ENCODE measurements at regions of chr16 and their contacts with region 1.

Region 1: DNA sequence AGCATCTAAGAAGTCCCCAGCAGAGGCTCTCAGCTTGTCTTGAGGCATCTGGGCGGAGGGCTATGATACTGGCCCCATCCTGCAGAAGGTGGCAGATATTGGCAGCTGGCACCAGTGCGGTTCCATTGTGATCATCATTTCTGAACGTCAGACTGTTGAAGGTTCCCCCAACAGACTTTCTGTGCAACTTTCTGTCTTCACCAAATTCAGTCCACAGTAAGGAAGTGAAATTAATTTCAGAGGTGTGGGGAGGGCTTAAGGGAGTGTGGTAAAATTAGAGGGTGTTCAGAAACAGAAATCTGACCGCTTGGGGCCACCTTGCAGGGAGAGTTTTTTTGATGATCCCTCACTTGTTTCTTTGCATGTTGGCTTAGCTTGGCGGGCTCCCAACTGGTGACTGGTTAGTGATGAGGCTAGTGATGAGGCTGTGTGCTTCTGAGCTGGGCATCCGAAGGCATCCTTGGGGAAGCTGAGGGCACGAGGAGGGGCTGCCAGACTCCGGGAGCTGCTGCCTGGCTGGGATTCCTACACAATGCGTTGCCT is at the start of gene CIITA:
- DNase-seq: peak; percentile 62
- ATAC-seq: peak; percentile 71
- H3K4me3 Mint-ChIP-seq: peak within 1 kb of the TSS; percentile 100
- H3K27ac Mint-ChIP-seq: peak within 1 kb of the TSS; percentile 90
- H3K4me1 Mint-ChIP-seq: peaks cover 70% of the 10 kb centered on the region
- H3K27me3 Mint-ChIP-seq: no peaks in the 10 kb centered on the region
- CTCF ChIP-seq: no peak
- total RNA-seq, gene CIITA: 332 and 401 TPM in 2 replicates

Region 2: DNA sequence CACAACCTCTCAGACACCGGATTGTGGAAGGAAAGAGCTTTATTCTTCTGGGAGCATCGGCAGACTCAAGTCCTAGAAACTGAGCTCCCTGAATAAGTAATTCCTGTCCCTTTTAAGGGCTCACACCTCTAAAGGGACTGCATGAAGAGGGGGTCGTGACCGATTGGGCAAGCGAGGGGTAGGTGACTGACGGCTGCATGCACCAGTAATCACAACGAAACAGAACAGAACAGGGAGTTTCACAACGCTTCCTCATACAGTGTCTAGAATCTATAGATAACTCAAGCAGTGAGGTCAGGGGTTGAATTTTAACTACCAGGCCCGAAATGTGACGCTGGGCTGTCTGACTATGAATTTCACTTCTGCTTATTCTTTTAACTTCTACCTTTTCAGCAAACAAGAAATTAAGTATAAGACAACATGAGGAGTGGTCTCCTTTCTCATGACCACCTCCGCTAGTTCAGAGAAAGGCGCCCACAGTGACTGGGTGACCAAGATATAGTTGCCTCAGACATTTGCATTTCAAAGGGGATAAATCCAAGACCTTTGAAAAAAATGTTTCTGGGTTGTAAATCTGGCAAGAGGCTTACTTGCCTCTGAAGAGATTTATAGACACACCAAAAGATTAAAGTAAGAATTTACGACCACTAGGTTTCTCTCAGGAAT is 579.4 kb before region 1 on chr16:
- CTCF ChIA-PET with region 1: no interaction called
- POLR2A ChIA-PET with region 1: no interaction called
- intact Hi-C with region 1: loop called (anchors 2 kb)
- DNase-seq: peak; percentile 43
- ATAC-seq: peak; percentile 94
- H3K4me3 Mint-ChIP-seq: peak overlapping the region; percentile 69
- H3K27ac Mint-ChIP-seq: peak overlapping the region; percentile 97
- H3K4me1 Mint-ChIP-seq: peaks cover 62% of the 10 kb centered on the region
- H3K27me3 Mint-ChIP-seq: no peaks in the 10 kb centered on the region
- CTCF ChIP-seq: no peak

Region 3: DNA sequence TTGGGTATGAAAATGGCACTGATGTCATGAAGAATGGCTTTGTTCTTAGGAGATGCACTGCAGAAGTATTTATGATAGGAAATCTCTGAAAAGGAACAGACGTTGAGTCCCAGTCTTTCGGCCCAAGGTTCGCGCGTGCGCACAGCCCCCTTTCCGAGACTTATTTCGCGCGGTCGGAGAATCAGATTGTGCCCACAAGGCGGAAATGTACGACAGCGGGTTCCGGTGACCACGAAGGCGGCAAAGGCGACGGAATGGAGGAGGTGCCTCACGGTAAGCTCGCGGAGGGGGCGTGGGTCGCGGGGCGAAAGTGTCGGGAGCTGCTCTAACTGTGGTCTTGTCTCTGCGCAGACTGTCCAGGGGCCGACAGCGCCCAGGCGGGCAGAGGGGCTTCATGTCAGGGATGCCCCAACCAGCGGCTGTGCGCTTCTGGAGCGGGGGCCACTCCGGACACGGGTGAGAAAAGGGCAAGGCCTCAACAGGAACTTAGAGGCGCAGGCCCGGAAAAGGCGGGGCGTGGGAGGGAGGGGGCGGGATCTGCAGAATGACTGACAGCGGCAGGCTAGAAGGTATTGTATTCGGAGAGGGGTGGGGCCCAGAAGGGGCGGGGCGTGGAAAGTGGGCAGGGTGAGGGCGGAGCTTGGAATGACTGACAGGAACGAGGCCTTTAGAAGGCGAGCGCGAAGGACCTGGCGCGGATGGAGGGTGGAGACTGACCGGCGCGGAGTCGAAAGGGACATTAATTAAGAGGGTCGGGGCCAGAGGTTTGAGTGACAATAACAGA is 133.1 kb before region 1 on chr16 and contains the start of gene NUBP1:
- CTCF ChIA-PET with region 1: interaction called, 19 read pairs
- POLR2A ChIA-PET with region 1: interaction called, 88 read pairs
- intact Hi-C with region 1: no loop called
- DNase-seq: peak; percentile 98
- ATAC-seq: peak; percentile 94
- H3K4me3 Mint-ChIP-seq: peak within 1 kb of the TSS; percentile 94
- H3K27ac Mint-ChIP-seq: peak within 1 kb of the TSS; percentile 99
- H3K4me1 Mint-ChIP-seq: peaks cover 69% of the 10 kb centered on the region
- H3K27me3 Mint-ChIP-seq: no peaks in the 10 kb centered on the region
- CTCF ChIP-seq: no peak
- total RNA-seq, gene NUBP1: 74.1 and 77.2 TPM in 2 replicates

Region 4: DNA sequence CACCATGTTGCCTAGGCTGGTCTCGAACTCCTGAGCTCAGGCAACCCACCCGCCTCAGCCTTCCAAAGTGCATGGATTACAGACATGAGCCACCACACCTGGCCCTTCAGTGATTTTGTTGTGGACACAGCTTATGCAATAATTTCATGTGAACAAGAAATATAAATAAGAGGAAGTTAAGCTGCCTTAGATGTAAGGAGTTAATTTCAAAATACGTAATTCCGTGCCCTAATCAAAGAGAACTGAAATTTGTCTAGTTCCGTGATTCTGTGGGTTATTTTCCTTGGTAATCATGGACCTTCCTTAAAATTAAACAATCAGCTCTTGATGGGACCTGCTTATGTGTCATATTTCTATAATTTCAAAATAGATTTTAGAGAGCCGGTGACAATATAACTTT is 70.2 kb before region 1 on chr16:
- CTCF ChIA-PET with region 1: interaction called, 7 read pairs
- POLR2A ChIA-PET with region 1: interaction called, 34 read pairs
- intact Hi-C with region 1: no loop called
- DNase-seq: no peak
- ATAC-seq: peak; percentile 54
- H3K4me3 Mint-ChIP-seq: peak overlapping the region; percentile 46
- H3K27ac Mint-ChIP-seq: peak overlapping the region; percentile 89
- H3K4me1 Mint-ChIP-seq: peaks cover 79% of the 10 kb centered on the region
- H3K27me3 Mint-ChIP-seq: no peaks in the 10 kb centered on the region
- CTCF ChIP-seq: no peak

Region 5: GRCh38 chr16:10856042-10856441 is 20.8 kb before region 1 on chr16:
- CTCF ChIA-PET with region 1: no interaction called
- POLR2A ChIA-PET with region 1: no interaction called
- intact Hi-C with region 1: no loop called
- DNase-seq: no peak
- ATAC-seq: no peak
- H3K4me3 Mint-ChIP-seq: no peak overlapping the region
- H3K27ac Mint-ChIP-seq: no peak overlapping the region
- H3K4me1 Mint-ChIP-seq: peaks cover 26% of the 10 kb centered on the region
- H3K27me3 Mint-ChIP-seq: no peaks in the 10 kb centered on the region
- CTCF ChIP-seq: no peak

Region 6: GRCh38 chr16:10888320-10888937 is 11.6 kb after region 1 on chr16:
- CTCF ChIA-PET with region 1: interaction called, 76 read pairs
- POLR2A ChIA-PET with region 1: interaction called, 318 read pairs
- intact Hi-C with region 1: loop called (anchors 1 kb)
- DNase-seq: no peak
- ATAC-seq: peak; percentile 6
- H3K4me3 Mint-ChIP-seq: peak overlapping the region; percentile 82
- H3K27ac Mint-ChIP-seq: peak overlapping the region; percentile 87
- H3K4me1 Mint-ChIP-seq: peaks cover 99% of the 10 kb centered on the region
- H3K27me3 Mint-ChIP-seq: no peaks in the 10 kb centered on the region
- CTCF ChIP-seq: no peak

Region 7: GRCh38 chr16:10944249-10945064 is 67.6 kb after region 1 on chr16 and contains the start of gene CLEC16A:
- CTCF ChIA-PET with region 1: interaction called, 4 read pairs
- POLR2A ChIA-PET with region 1: interaction called, 4 read pairs
- intact Hi-C with region 1: loop called (anchors 2 kb)
- DNase-seq: peak; percentile 97
- ATAC-seq: peak; percentile 74
- H3K4me3 Mint-ChIP-seq: peak within 1 kb of the TSS; percentile 90
- H3K27ac Mint-ChIP-seq: peak within 1 kb of the TSS; percentile 81
- H3K4me1 Mint-ChIP-seq: peaks cover 83% of the 10 kb centered on the region
- H3K27me3 Mint-ChIP-seq: no peaks in the 10 kb centered on the region
- CTCF ChIP-seq: no peak
- total RNA-seq, gene CLEC16A: 53.4 and 57.6 TPM in 2 replicates

Measured in activated B cell treated with CpG ODN at 0.5 μM for 24 hours (primary cell).